ENCODE measurements at regions of chr19 and their contacts with region 1.

Region 1: GRCh38 chr19:58558623-58559274 is 338 bp upstream of the UBE2M start:
- DNase-seq: peak; percentile 94 to 99 (median 98)
- H3K4me3 ChIP-seq: peak overlapping the region; percentile 57 to 100 (median 85)
- H3K27ac ChIP-seq: peak overlapping the region; percentile 87 to 100 (median 100)
- H3K27me3 ChIP-seq: no peaks in the 10 kb centered on the region
- CTCF ChIP-seq: peak in 16 of 56 donors; percentile 5 to 43 (median 12)

Region 2: GRCh38 chr19:58531034-58531840 is 27.5 kb before region 1 on chr19:
- intact Hi-C with region 1: no loop called
- DNase-seq: no peak
- H3K4me3 ChIP-seq: no peak overlapping the region
- H3K27ac ChIP-seq: no peak overlapping the region
- H3K27me3 ChIP-seq: peaks cover 0 to 7% (median 0%) of the 10 kb centered on the region in 45 donors
- CTCF ChIP-seq: no peak

Region 3: DNA sequence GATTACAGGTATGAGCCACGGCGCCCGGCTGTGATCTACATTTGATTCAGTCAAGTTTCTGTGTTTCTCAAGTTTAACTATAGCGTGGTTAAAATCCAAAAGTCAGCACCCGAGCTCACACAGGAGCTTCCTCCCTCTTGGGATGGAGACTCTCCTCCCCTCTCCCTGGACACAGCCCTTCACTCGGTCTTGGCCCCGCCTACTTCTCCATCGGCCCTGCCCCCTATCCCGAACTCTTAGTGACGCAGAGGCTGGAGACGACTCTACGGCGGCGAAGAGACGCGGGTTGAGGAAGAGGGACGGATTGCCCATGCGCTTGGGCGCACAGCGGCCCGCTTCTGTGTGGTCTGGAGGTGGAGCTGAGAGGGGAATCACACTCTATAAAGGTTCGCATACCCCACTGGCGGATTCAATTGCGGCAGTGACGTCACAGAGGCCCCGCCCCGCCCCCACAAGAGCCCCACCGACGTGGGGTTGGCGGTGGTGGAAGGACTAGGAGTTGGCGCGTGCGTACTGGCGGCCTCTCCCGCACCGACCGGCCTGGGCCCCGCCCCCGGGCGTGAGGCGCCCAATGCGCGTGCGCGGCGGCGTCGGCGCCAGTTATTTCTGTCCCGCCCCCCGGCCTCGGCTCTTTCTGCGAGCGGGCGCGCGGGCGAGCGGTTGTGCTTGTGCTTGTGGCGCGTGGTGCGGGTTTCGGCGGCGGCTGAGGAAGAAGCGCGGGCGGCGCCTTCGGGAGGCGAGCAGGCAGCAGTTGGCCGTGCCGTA is 14.7 kb before region 1 on chr19 and contains the start of gene TRIM28:
- intact Hi-C with region 1: loop called (anchors 1 kb)
- DNase-seq: peak; percentile 95 to 99 (median 98)
- H3K4me3 ChIP-seq: peak within 1 kb of the TSS; percentile 64 to 97 (median 84)
- H3K27ac ChIP-seq: peak within 1 kb of the TSS; percentile 79 to 100 (median 97)
- H3K27me3 ChIP-seq: peaks cover 0 to 5% (median 0%) of the 10 kb centered on the region in 45 donors
- CTCF ChIP-seq: peak in 16 of 56 donors; percentile 5 to 40 (median 20)
- total RNA-seq, gene TRIM28: 130 to 228 (median 176) TPM

Region 4: GRCh38 chr19:58572818-58573657 is 14.3 kb after region 1 on chr19 and contains the start of gene MZF1:
- intact Hi-C with region 1: loop called (anchors 2 kb)
- DNase-seq: peak; percentile 98 to 100 (median 100)
- H3K4me3 ChIP-seq: peak within 1 kb of the TSS; percentile 45 to 97 (median 79)
- H3K27ac ChIP-seq: peak within 1 kb of the TSS; percentile 87 to 100 (median 99)
- H3K27me3 ChIP-seq: no peaks in the 10 kb centered on the region
- CTCF ChIP-seq: peak in 21 of 56 donors; percentile 1 to 41 (median 20)
- total RNA-seq, gene MZF1: 26.3 to 56.0 (median 39.2) TPM